ENCODE measurements at regions of chr1 and their contacts with region 1.

Region 1: GRCh38 chr1:168082008-168082876 is 54.5 kb downstream of the GPR161 start:
- DNase-seq: peak; percentile 81
- CTCF ChIP-seq: peak; percentile 94

Region 2: DNA sequence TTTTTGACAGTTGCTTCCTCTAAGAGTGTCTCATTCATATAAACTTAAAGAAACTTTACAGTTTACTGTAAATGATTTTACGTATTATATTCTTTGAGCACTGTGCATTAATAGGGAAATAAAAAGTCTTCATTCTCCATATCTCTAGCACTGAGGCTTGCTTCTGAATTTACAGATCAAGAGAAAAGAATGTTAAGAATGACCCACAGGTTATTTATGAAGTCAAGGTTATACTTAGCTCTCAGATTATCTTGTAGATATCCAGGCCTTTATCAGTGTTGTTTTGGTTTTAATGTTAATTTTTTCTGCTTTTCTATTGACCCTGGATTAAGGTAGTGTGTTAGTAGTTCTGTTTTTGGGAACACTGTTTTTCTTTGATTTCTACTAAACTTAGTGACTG is 36.9 kb before region 1 on chr1:
- CTCF ChIA-PET with region 1: interaction called, 12 read pairs
- POLR2A ChIA-PET with region 1: no interaction called
- DNase-seq: no peak
- CTCF ChIP-seq: no peak

Region 3: DNA sequence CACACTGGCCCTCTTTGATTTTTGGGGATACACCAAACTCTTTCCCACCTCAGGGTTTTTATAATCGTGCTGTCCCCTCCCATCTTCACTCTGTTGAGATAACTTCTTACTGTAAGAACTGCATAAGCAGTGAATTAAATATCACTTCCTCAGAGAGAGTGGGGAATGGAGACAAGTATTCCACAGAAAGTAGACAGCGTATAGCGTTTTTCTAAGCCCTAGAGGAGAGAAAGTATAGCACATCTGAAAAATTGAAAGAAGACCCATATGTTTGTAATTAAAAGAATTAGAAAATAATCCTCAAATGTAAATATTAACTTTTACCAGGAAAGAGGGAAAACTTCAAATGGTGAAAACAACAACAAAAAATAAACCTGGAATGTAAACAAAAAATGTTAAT is 12.9 kb before region 1 on chr1:
- CTCF ChIA-PET with region 1: interaction called, 93 read pairs
- POLR2A ChIA-PET with region 1: no interaction called
- DNase-seq: no peak
- CTCF ChIP-seq: no peak

Region 4: DNA sequence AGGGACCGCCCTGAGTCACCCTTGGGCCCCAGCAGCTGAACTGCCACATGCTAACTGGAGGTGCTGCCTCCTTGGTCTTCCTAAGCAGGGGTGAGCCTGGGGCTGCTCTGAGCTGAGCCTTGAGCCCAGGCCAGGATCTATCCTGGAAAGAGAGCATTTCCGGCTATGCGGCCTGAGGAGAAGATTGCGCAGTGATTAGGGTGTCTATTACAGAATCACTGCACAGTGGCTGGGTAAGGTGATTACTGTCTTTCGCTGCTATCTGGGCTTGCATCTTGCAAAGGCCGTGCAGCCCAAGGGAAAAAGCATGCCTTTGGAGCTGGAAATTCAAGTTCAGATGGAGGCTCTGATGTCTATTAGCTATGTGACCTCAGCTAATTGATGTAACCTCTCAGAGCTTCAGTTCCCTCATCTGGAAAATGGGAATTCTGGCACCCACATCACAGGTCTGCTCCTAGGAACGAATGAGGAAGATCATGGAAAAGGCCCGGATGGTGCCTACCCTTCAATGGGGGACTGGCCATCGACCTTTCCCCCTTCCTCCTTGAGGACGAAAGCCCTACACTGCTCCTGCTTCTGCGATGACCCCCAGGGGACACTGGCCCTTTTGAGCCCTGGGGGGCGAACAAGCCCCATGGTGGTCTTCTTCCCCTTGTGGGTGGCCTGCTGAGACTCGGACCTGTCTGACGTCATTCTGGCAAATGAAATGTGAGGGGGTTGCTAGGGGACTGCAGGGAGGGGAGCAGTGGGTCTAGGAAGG is 16.5 kb after region 1 on chr1:
- CTCF ChIA-PET with region 1: interaction called, 77 read pairs
- POLR2A ChIA-PET with region 1: no interaction called
- DNase-seq: no peak
- CTCF ChIP-seq: no peak

Region 5: GRCh38 chr1:168161459-168161858 is 79.2 kb after region 1 on chr1:
- CTCF ChIA-PET with region 1: interaction called, 10 read pairs
- POLR2A ChIA-PET with region 1: no interaction called
- DNase-seq: no peak
- CTCF ChIP-seq: no peak